ENCODE measurements at regions of chr12 and their contacts with region 1.

Region 1: DNA sequence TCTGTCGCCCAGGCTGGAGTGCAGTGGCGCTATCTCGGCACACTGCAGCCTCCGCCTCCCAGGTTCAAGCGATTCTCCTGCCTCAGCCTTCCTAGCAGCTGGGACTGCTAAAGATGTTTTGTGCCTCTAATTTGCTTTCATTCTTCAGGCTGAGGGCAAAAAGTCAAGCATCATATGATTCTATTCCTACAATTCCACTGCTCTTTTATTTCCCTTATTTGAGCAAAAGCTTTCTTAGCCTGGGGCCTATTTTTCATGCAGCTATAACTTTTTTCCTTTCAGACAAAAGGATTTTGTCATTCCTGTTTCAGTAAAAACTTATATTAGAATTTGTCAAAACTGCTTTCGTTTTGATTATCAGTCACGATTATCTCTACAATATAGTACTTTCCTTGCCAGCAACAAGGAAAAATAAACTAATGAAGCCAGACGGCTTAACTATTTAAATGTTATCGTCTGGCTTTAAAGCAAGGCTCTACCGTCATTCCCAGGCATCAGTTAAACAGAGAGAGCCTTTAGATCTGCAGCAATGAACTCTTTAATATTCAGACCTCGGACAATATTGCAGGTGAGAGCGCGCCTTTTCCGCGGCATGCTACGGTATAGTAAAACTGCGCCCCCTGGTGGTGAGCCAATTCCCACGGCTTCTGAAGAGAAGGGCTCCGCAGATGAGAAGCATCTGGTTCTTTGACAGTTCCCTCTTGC is 1.4 kb upstream of the SLC2A13 start:
- DNase-seq: peak; percentile 67
- H3K4me3 ChIP-seq: peak overlapping the region; percentile 38 to 88 (median 54)
- H3K27ac ChIP-seq: no peak overlapping the region
- H3K4me1 ChIP-seq: peaks cover 18% of the 10 kb centered on the region
- H3K27me3 ChIP-seq: no peaks in the 10 kb centered on the region
- CTCF ChIP-seq: peak; percentile 85 to 89

Region 2: DNA sequence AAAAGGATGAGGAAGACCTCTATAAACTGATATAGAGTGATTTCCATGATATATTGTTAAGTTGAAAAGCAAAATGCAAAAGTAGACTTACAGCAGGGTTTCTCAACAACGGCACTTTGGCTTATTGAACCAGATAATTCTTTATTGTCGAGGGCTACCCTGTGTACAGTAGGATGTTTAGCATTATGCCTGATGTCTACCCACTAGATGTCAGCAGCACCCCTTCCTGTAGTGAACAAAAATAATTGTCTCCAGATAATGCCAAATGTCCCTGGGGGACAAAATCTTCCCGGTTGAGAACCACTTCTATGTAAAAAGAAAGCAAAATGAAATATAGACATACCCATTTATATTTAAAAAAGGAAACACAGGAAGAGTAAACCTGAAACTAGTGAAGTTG is 520.0 kb before region 1 on chr12:
- CTCF ChIA-PET with region 1: no interaction called
- dilution Hi-C with region 1: no loop called
- in situ Hi-C with region 1: no loop called
- intact Hi-C with region 1: loop called (anchors 10 kb)
- DNase-seq: peak; percentile 20
- H3K4me3 ChIP-seq: no peak overlapping the region
- H3K27ac ChIP-seq: no peak overlapping the region
- H3K4me1 ChIP-seq: no peaks in the 10 kb centered on the region
- H3K27me3 ChIP-seq: no peaks in the 10 kb centered on the region
- CTCF ChIP-seq: peak; percentile 48 to 59

Region 3: GRCh38 chr12:39743655-39744054 is 363.6 kb before region 1 on chr12:
- CTCF ChIA-PET with region 1: no interaction called
- dilution Hi-C with region 1: no loop called
- in situ Hi-C with region 1: no loop called
- intact Hi-C with region 1: no loop called
- DNase-seq: no peak
- H3K4me3 ChIP-seq: no peak overlapping the region
- H3K27ac ChIP-seq: no peak overlapping the region
- H3K4me1 ChIP-seq: no peaks in the 10 kb centered on the region
- H3K27me3 ChIP-seq: no peaks in the 10 kb centered on the region
- CTCF ChIP-seq: no peak

Region 4: DNA sequence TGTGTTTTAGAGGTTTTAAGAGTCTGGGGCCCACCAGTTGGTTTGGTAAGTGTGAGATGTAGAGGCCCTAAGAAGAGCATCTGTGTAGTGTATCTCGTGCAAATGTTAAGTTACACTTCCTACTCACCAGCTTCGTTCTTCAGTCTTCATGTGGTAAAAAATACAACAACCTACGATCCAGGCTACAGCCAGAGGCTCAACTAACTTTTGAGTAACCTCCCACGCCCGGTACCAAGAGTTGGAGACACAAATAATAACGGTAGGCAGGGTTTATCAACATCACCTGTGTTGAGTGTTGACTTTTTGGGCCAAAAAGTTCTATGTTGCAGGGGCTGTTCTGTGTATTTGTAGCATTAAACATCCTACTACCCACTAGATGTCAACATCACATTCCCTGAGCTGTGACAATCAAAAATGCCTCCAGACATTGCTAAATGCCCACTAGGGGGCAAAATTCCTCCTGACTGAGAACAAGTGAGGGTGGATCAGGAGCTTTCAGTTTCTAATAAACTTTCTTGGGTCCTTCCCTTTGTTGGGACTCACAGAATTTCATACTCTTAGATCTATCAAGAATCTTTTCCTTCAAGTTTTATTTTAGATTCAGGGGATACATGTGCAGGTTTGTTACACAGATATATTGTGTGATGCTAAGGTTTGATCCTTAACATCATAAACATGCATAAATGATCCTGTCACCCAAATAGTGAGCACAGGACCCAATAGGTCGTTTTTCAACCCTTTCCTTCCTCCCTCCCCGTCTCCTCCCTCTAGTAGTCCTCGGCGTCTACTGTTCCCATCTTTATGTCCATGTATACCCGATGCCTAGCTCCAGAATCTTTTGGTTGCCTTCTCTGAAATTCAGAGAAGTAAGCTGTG is 96.1 kb before region 1 on chr12:
- CTCF ChIA-PET with region 1: interaction called, 4 read pairs
- dilution Hi-C with region 1: no loop called
- in situ Hi-C with region 1: loop called (anchors 5 kb)
- intact Hi-C with region 1: loop called (anchors 1 kb)
- DNase-seq: peak; percentile 64
- H3K4me3 ChIP-seq: no peak overlapping the region
- H3K27ac ChIP-seq: no peak overlapping the region
- H3K4me1 ChIP-seq: peaks cover 6% of the 10 kb centered on the region
- H3K27me3 ChIP-seq: no peaks in the 10 kb centered on the region
- CTCF ChIP-seq: peak; percentile 74 to 86

Region 5: DNA sequence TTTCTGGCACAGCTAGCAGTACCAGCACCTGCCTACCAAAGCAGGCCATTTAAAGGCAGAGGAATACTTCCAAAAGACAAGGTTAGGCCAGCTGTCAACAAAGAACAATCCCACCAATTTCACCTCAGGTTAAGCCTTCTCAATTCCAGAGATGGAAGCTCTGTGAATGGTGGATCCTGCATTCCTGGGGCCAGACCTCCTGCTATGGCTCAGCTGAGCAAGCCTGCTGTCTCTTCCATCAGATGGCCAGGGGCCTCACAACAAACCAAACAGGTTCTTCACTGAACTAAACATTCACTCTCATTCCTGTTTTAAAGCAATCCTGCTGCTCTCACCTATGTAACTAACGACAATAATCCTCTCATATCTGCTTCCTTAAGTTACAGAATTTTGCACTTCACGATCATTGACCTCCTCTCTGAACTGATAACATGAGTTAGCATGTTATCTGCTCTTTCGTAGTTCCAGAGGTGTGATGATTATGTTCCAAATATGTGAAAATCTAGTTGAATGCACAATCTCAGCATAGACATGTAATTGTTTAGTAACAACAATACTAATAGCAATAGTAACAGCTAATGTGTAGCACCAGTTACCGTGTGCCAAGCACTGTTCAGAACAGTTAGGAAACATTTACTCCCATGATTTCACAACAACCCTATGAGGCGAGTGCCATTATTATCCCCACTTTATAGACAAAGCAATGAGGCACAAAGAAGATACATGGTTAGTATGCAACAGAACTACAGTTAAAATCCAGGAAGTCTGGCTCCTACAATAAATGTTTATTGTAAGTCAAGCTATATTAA is 74.6 kb before region 1 on chr12:
- CTCF ChIA-PET with region 1: no interaction called
- dilution Hi-C with region 1: no loop called
- in situ Hi-C with region 1: no loop called
- intact Hi-C with region 1: no loop called
- DNase-seq: no peak
- H3K4me3 ChIP-seq: no peak overlapping the region
- H3K27ac ChIP-seq: no peak overlapping the region
- H3K4me1 ChIP-seq: no peaks in the 10 kb centered on the region
- H3K27me3 ChIP-seq: no peaks in the 10 kb centered on the region
- CTCF ChIP-seq: no peak